CD14-positive monocyte (primary cell): ENCODE measurements at regions of chr6 and their contacts with region 1.

Region 1: GRCh38 chr6:13454286-13455221 is 32.8 kb downstream of the GFOD1 start:
- DNase-seq: peak; percentile 89 to 95 (median 94)
- H3K4me3 ChIP-seq: peak overlapping the region in 1 of 3 experiments; percentile 11
- H3K4me3 Mint-ChIP-seq: peak overlapping the region; percentile 61 to 72
- H3K27ac ChIP-seq: peak overlapping the region; percentile 71 to 83
- H3K27ac Mint-ChIP-seq: peak overlapping the region; percentile 89 to 99 (median 92)
- H3K4me1 ChIP-seq: peaks cover 19 to 20% of the 10 kb centered on the region in 2 donors
- H3K4me1 Mint-ChIP-seq: peaks cover 23% of the 10 kb centered on the region
- H3K27me3 ChIP-seq: no peaks in the 10 kb centered on the region
- H3K27me3 Mint-ChIP-seq: peaks cover 2% of the 10 kb centered on the region in 3 donors
- CTCF ChIP-seq: no peak

Region 2: DNA sequence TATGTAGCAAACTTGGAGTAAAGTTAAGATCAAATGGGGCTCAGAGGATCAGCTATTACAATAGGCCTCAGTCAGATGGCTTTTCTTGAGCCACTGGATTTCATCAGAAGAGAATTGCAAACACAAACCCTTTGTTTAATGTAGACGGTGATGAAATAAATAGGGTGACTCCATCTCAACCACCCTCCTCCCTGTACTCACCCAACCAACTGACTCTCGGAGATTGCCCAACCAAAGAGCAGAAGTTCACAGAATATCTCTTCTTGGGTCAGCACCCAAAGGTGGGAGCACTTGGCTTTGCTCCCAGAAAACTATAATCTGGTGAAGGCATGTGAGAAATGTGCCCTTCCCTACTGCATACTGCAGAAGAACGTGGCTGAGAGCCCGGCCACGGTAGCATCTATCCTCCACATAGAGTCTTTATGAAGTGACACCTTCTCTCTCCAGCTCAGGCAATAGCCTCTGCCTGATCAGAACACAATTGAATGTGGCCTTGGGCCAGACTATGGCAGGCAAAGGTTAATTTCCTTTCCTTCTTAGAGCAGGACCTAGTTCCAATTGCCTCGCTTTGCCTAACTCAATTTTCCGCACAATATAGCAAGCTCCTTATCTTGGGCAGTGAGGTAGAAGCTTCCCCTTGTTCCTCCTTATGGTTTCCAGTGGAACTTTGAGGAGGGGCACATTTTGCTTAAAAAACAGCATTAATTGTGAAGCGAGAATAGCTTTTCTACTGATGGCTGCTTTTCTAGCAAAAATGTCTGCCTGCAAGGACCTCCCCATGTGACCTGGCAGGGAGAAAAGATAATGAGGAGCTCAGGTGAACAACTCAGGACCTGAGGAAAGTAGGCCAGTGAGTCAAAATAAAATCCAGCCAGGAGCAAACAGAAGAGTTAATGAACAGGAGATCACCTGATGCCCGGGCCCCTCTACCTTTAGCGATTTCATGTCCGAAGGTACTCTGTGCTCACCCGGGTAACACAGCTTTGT is 46.6 kb before region 1 on chr6:
- intact Hi-C with region 1: loop called (anchors 5 to 10 kb)
- DNase-seq: peak; percentile 92 to 97 (median 94)
- H3K4me3 ChIP-seq: peak overlapping the region in 1 of 3 experiments; percentile 27
- H3K4me3 Mint-ChIP-seq: no peak overlapping the region
- H3K27ac ChIP-seq: peak overlapping the region; percentile 91 to 98
- H3K27ac Mint-ChIP-seq: peak overlapping the region; percentile 99 to 100 (median 100)
- H3K4me1 ChIP-seq: peaks cover 81 to 98% of the 10 kb centered on the region in 2 donors
- H3K4me1 Mint-ChIP-seq: peaks cover 87% of the 10 kb centered on the region
- H3K27me3 ChIP-seq: no peaks in the 10 kb centered on the region
- H3K27me3 Mint-ChIP-seq: peaks cover 0 to 6% (median 0%) of the 10 kb centered on the region in 3 donors
- CTCF ChIP-seq: no peak